CD8-positive, alpha-beta T cell (primary cell): ENCODE measurements at regions of chr3 and their contacts with region 1.

Region 1: GRCh38 chr3:160486459-160486869 is 36.9 kb upstream of the TRIM59 start:
- DNase-seq: peak in 2 of 9 experiments; percentile 40 to 57
- ATAC-seq: no peak
- H3K4me3 ChIP-seq: no peak overlapping the region
- H3K4me3 Mint-ChIP-seq: no peak overlapping the region
- H3K27ac ChIP-seq: no peak overlapping the region
- H3K27ac Mint-ChIP-seq: no peak overlapping the region
- H3K4me1 ChIP-seq: no peaks in the 10 kb centered on the region
- H3K4me1 Mint-ChIP-seq: peaks cover 3% of the 10 kb centered on the region
- H3K27me3 ChIP-seq: no peaks in the 10 kb centered on the region
- H3K27me3 Mint-ChIP-seq: peaks cover 9% of the 10 kb centered on the region
- CTCF ChIP-seq: peak; percentile 84

Region 2: GRCh38 chr3:158845765-158846350 is 1640.6 kb before region 1 on chr3:
- CTCF ChIA-PET with region 1: no interaction called
- POLR2A ChIA-PET with region 1: no interaction called
- intact Hi-C with region 1: loop called (anchors 2 to 5 kb)
- DNase-seq: peak in 5 of 9 experiments; percentile 17 to 63 (median 28)
- ATAC-seq: peak; percentile 57
- H3K4me3 ChIP-seq: no peak overlapping the region
- H3K4me3 Mint-ChIP-seq: no peak overlapping the region
- H3K27ac ChIP-seq: no peak overlapping the region
- H3K27ac Mint-ChIP-seq: no peak overlapping the region
- H3K4me1 ChIP-seq: peaks cover 4% of the 10 kb centered on the region
- H3K4me1 Mint-ChIP-seq: peaks cover 9% of the 10 kb centered on the region
- H3K27me3 ChIP-seq: no peaks in the 10 kb centered on the region
- H3K27me3 Mint-ChIP-seq: no peaks in the 10 kb centered on the region
- CTCF ChIP-seq: peak; percentile 87

Region 3: GRCh38 chr3:159884661-159885402 is 601.6 kb before region 1 on chr3:
- CTCF ChIA-PET with region 1: no interaction called
- POLR2A ChIA-PET with region 1: no interaction called
- intact Hi-C with region 1: loop called (anchors 1 to 5 kb)
- DNase-seq: peak in 2 of 9 experiments; percentile 22 to 33
- ATAC-seq: no peak
- H3K4me3 ChIP-seq: no peak overlapping the region
- H3K4me3 Mint-ChIP-seq: no peak overlapping the region
- H3K27ac ChIP-seq: no peak overlapping the region
- H3K27ac Mint-ChIP-seq: no peak overlapping the region
- H3K4me1 ChIP-seq: no peaks in the 10 kb centered on the region
- H3K4me1 Mint-ChIP-seq: no peaks in the 10 kb centered on the region
- H3K27me3 ChIP-seq: no peaks in the 10 kb centered on the region
- H3K27me3 Mint-ChIP-seq: peaks cover 3% of the 10 kb centered on the region
- CTCF ChIP-seq: no peak

Region 4: GRCh38 chr3:160027541-160028195 is 458.8 kb before region 1 on chr3:
- CTCF ChIA-PET with region 1: interaction called, 9 read pairs
- POLR2A ChIA-PET with region 1: no interaction called
- intact Hi-C with region 1: loop called in 1 of 2 experiments (anchors 5 kb)
- DNase-seq: no peak
- ATAC-seq: no peak
- H3K4me3 ChIP-seq: no peak overlapping the region
- H3K4me3 Mint-ChIP-seq: no peak overlapping the region
- H3K27ac ChIP-seq: no peak overlapping the region
- H3K27ac Mint-ChIP-seq: no peak overlapping the region
- H3K4me1 ChIP-seq: no peaks in the 10 kb centered on the region
- H3K4me1 Mint-ChIP-seq: no peaks in the 10 kb centered on the region
- H3K27me3 ChIP-seq: no peaks in the 10 kb centered on the region
- H3K27me3 Mint-ChIP-seq: no peaks in the 10 kb centered on the region
- CTCF ChIP-seq: no peak

Region 5: DNA sequence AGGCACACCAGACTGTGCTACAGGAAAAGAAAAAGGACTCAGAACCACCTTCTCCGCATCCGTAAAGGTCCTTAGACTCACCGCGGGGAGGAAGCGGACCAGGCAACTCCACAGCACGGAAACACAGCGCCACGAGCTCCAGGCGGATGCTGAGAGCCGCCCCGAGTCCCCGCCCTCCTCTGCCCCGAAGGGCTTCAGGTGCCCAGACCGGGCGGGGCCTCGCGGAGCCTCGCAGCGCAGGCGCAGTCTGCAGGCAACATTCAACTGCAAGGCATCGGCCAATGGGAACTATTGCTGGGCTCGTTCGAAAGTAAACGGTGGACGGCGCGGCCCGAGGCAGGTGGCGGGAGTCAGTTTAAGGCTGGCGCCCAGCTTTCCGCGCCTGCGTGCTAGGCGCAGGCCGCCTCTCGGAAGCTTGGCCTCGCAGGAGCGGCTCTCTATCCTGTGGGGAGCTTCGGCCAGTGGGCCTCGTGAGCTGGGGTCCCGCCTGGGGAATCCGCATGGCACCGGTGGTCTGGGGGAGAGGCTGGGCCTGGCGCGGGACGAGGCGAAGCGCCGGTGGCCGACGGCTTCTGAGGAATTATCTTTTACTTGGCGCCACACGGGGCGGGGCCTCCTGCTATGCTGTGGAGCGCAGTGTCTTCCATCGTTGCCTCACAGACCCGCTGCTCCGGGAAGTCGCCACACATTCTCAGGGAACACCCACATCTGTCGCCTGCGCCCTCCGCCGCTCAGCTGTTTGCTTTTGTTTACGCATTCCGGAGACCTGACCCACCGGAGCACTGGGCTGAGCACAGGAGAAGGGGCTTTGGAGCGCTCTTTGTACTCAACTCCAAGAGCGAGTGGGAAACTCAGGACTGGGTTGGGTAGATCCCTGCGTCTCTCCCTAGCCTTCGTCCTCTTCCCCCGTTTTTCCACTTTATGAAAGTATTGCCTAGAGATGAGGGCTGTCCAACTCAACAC is 36.5 kb before region 1 on chr3 and contains the start of gene TRIM59:
- CTCF ChIA-PET with region 1: no interaction called
- POLR2A ChIA-PET with region 1: interaction called, 3 read pairs
- intact Hi-C with region 1: loop called in 1 of 2 experiments (anchors 5 kb)
- DNase-seq: peak; percentile 92 to 99 (median 95)
- ATAC-seq: peak; percentile 96
- H3K4me3 ChIP-seq: peak within 1 kb of the TSS; percentile 80 to 91
- H3K4me3 Mint-ChIP-seq: peak within 1 kb of the TSS; percentile 95
- H3K27ac ChIP-seq: peak within 1 kb of the TSS; percentile 60 to 85
- H3K27ac Mint-ChIP-seq: peak within 1 kb of the TSS; percentile 93
- H3K4me1 ChIP-seq: peaks cover 22% of the 10 kb centered on the region
- H3K4me1 Mint-ChIP-seq: peaks cover 38% of the 10 kb centered on the region
- H3K27me3 ChIP-seq: no peaks in the 10 kb centered on the region
- H3K27me3 Mint-ChIP-seq: no peaks in the 10 kb centered on the region
- CTCF ChIP-seq: no peak
- total RNA-seq, gene TRIM59: 15.0 to 15.5 TPM

Region 6: GRCh38 chr3:160796813-160797164 is 310.3 kb after region 1 on chr3:
- CTCF ChIA-PET with region 1: no interaction called
- POLR2A ChIA-PET with region 1: no interaction called
- intact Hi-C with region 1: no loop called
- DNase-seq: no peak
- ATAC-seq: no peak
- H3K4me3 ChIP-seq: no peak overlapping the region
- H3K4me3 Mint-ChIP-seq: no peak overlapping the region
- H3K27ac ChIP-seq: no peak overlapping the region
- H3K27ac Mint-ChIP-seq: no peak overlapping the region
- H3K4me1 ChIP-seq: no peaks in the 10 kb centered on the region
- H3K4me1 Mint-ChIP-seq: peaks cover 3% of the 10 kb centered on the region
- H3K27me3 ChIP-seq: no peaks in the 10 kb centered on the region
- H3K27me3 Mint-ChIP-seq: peaks cover 2% of the 10 kb centered on the region
- CTCF ChIP-seq: no peak